Lower leg skin (tissue), 4 donors: ENCODE measurements at regions of chr11 and their contacts with region 1.

Region 1: DNA sequence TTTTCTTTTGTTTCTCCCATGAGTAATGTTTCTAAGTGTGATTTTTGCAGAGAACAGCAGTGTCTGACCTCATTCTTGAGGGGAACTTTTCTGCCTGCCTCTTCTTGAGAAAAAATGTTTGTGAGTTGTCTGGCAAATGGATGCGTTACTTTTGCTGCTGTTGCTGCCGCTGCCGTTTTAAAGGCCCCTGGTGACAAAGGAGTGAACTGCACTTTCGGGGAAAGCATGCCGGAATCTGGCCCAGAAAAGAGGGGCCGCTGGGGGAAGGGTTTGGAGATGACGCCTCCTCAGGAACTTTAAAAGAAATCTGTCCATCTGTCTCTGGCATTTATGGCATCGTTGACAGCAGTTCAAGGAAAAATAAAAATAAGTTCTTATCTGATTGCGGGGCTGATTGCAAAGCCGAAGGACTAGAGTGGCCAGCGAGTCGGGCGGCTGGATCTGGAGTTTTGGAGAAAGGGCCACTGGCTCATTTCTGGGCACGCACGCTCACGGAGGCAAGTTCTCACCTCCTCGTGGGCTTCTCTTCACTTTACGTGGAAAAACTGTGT is 16.5 kb downstream of the ZBTB16 start:
- DNase-seq: peak in 1 of 2 donors; percentile 86
- H3K4me3 ChIP-seq: no peak overlapping the region
- CTCF ChIP-seq: no peak
- POLR2A ChIP-seq: no peak

Region 2: DNA sequence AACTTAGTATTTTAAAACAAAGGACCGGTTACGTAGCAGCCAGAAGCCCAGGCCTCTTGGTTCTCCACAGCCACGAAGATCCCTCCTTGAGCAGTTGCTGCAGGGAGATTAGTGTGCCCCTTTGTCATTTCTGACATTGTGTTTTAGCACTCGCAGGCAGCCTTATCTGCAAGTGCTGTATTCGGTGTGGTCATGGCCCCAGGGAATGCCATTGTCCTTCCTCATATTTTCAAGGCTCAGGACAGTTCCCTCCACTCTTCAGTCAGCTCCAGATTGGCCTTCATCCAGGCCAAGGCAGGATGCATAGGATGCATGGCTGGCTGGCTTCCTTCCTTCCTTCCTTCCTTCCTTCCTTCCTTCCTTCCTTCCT is 72.0 kb after region 1 on chr11:
- intact Hi-C with region 1: loop called (anchors 10 kb)
- DNase-seq: no peak
- H3K4me3 ChIP-seq: no peak overlapping the region
- CTCF ChIP-seq: no peak
- POLR2A ChIP-seq: no peak

Region 3: GRCh38 chr11:114522818-114523217 is 446.9 kb after region 1 on chr11:
- intact Hi-C with region 1: no loop called
- DNase-seq: no peak
- H3K4me3 ChIP-seq: no peak overlapping the region
- CTCF ChIP-seq: no peak
- POLR2A ChIP-seq: no peak